ENCODE measurements at regions of chr12 and their contacts with region 1.

Region 1: GRCh38 chr12:7678738-7679137 is 13.0 kb upstream of the APOBEC1 start:
- DNase-seq: no peak
- ATAC-seq: no peak
- H3K4me3 ChIP-seq: no peak overlapping the region
- H3K27ac ChIP-seq: no peak overlapping the region
- H3K4me1 ChIP-seq: no peaks in the 10 kb centered on the region
- H3K27me3 ChIP-seq: no peaks in the 10 kb centered on the region
- CTCF ChIP-seq: no peak

Region 2: GRCh38 chr12:7628381-7628961 is 50.3 kb before region 1 on chr12:
- intact Hi-C with region 1: no loop called
- DNase-seq: peak in 1 of 2 donors; percentile 45
- ATAC-seq: no peak
- H3K4me3 ChIP-seq: no peak overlapping the region
- H3K27ac ChIP-seq: no peak overlapping the region
- H3K4me1 ChIP-seq: no peaks in the 10 kb centered on the region
- H3K27me3 ChIP-seq: peaks cover 0 to 5% (median 1%) of the 10 kb centered on the region in 3 donors
- CTCF ChIP-seq: no peak

Region 3: DNA sequence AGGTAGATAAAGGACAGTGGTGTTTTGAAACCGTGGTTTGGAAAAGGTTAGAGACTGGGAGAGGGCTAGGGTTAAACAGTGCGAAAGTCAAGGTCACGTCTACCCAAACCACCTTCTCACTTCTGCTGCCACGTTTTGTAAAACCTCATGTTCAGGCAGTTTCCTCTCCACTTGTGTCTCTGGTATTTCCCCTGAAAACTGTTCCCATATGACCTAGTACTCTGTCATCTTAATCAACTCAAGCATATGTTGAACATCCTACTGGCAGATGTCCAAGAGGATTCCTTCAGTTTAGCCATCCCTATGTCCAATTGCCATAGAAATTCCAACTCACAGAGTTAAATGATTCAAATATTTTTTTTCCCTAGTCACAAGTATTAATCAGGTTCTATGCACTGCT is 51.0 kb after region 1 on chr12:
- intact Hi-C with region 1: no loop called
- DNase-seq: no peak
- ATAC-seq: no peak
- H3K4me3 ChIP-seq: no peak overlapping the region
- H3K27ac ChIP-seq: no peak overlapping the region
- H3K4me1 ChIP-seq: no peaks in the 10 kb centered on the region
- H3K27me3 ChIP-seq: no peaks in the 10 kb centered on the region
- CTCF ChIP-seq: no peak

Region 4: GRCh38 chr12:7806863-7807487 is 128.2 kb after region 1 on chr12:
- intact Hi-C with region 1: loop called in 1 of 2 experiments (anchors 5 kb)
- DNase-seq: peak; percentile 34 to 60
- ATAC-seq: no peak
- H3K4me3 ChIP-seq: no peak overlapping the region
- H3K27ac ChIP-seq: no peak overlapping the region
- H3K4me1 ChIP-seq: no peaks in the 10 kb centered on the region
- H3K27me3 ChIP-seq: no peaks in the 10 kb centered on the region
- CTCF ChIP-seq: peak; percentile 57

Region 5: DNA sequence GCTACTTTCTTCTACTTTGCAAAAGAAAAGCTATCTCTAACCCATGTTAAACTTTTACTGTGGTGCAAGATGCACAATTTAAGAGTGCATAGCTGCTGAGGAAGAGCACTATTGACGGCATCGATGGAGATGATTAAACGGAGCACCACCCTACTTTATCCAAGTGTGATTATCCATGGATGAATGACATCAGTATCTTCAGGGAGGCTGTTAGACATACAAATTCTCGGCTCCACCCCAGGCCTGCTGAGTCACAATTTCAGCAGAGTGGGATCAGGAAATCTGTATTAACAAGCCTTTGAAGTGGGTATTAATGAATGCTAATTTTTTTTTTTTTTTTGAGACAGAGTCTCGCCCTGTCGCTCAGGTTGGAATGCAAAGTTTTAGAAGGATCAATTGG is 177.8 kb after region 1 on chr12:
- intact Hi-C with region 1: no loop called
- DNase-seq: no peak
- ATAC-seq: no peak
- H3K4me3 ChIP-seq: no peak overlapping the region
- H3K27ac ChIP-seq: no peak overlapping the region
- H3K4me1 ChIP-seq: no peaks in the 10 kb centered on the region
- H3K27me3 ChIP-seq: no peaks in the 10 kb centered on the region
- CTCF ChIP-seq: no peak

Measured in psoas muscle (tissue), 8 donors.